Colonic mucosa (tissue), 4 donors: ENCODE measurements at regions of chr2 and their contacts with region 1.

Region 1: DNA sequence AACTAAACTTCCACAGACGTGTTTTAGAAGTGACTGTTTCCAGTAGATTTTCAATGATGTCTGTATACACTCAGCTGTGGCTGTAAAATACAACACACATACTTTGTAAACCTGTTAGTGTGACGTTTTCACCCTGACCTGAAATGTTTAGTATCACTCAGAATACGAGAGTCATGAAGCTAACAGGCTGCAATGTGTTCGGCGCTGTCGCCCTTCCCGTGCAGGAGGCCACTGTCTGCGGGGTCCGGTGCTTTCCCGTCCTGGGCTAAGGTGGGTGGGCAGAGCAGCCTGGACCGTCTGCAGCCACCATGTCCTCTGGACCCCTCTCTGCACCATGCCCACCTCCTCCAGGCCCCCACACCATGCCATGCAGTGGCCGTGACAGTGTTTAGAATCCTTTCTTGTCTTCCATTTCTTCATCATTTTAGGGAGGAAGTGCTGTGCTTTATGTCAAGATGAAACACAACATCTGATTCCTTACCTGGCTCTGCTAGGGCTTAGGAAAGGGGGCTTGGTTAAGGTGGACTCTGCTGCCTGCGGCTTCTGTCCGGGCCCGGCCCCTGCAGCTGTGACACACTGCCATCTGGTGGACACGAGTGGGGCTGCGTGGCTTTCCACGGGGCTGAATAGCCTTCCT is 53.8 kb upstream of the RBM44 start:
- DNase-seq: peak; percentile 80
- H3K4me3 ChIP-seq: no peak overlapping the region
- H3K27ac ChIP-seq: no peak overlapping the region
- H3K4me1 ChIP-seq: peaks cover 12% of the 10 kb centered on the region
- H3K27me3 ChIP-seq: no peaks in the 10 kb centered on the region
- CTCF ChIP-seq: peak; percentile 98

Region 2: GRCh38 chr2:237596520-237596860 is 148.2 kb before region 1 on chr2:
- intact Hi-C with region 1: loop called (anchors 5 kb)
- DNase-seq: no peak
- H3K4me3 ChIP-seq: no peak overlapping the region
- H3K27ac ChIP-seq: no peak overlapping the region
- H3K4me1 ChIP-seq: no peaks in the 10 kb centered on the region
- H3K27me3 ChIP-seq: no peaks in the 10 kb centered on the region
- CTCF ChIP-seq: no peak

Region 3: GRCh38 chr2:237673126-237674001 is 71.4 kb before region 1 on chr2:
- intact Hi-C with region 1: loop called (anchors 1 kb)
- DNase-seq: peak; percentile 78
- H3K4me3 ChIP-seq: peak overlapping the region; percentile 31
- H3K27ac ChIP-seq: peak overlapping the region; percentile 8
- H3K4me1 ChIP-seq: peaks cover 4% of the 10 kb centered on the region
- H3K27me3 ChIP-seq: no peaks in the 10 kb centered on the region
- CTCF ChIP-seq: peak; percentile 70